Activated CD4-positive, alpha-beta T cell treated with anti-CD3 and anti-CD28 coated beads for 36 hours (primary cell): ENCODE measurements at regions of chr13 and their contacts with region 1.

Region 1: DNA sequence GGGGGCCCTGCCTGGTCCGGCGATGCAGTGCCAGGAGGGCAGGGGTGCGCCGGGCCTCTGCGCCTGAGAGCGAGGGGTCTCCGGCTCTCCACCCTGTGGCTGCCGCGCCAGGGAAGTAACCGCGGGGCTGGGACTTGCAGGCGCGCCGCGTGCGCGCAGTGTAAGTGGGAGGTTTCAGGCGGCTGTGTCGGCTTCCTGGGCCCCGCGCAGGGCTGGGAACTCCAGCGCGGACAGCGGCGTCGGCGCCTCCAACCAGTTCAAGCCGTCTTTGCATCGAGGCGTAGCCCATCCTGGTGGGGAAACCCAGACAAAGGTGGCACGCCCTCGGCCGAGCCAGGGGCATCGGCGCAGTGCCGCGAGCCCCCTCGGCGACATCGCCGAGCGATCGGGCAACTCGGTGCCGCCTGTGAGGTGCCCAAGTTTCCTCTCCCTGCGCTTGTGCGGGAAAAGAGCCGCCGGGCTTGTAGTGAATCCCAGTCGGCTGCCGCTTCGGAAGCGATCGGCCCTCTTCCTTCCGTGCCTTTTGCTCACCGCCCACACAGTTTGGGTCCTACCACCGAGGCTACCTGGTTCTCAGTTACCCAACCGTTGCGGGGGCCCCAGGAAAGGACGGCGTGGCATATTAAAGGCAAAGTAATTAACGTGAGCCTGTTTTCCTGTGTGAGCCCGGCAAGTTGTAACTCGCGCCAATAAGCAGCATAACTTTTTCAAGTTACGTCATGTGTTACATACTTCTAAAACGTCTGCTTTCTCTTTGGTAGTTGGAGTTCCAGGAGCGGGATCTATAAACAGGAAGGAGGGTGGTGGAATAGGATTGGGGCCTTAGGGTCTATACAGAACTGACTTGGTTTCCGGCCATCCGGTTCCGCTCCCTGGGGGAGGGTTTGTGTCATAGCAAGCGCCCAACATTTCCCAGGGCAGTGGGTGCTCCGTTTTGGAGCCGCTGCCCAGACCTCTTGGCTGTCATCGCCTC is 1.2 kb downstream of the LRCH1 start:
- DNase-seq: peak; percentile 82
- ATAC-seq: peak; percentile 66
- H3K4me3 Mint-ChIP-seq: peak overlapping the region; percentile 91
- H3K27ac Mint-ChIP-seq: peak overlapping the region; percentile 91
- H3K4me1 Mint-ChIP-seq: peaks cover 47% of the 10 kb centered on the region
- H3K27me3 Mint-ChIP-seq: no peaks in the 10 kb centered on the region

Region 2: GRCh38 chr13:45974500-45974899 is 579.7 kb before region 1 on chr13:
- CTCF ChIA-PET with region 1: no interaction called
- POLR2A ChIA-PET with region 1: no interaction called
- intact Hi-C with region 1: no loop called
- DNase-seq: no peak
- ATAC-seq: no peak
- H3K4me3 Mint-ChIP-seq: no peak overlapping the region
- H3K27ac Mint-ChIP-seq: no peak overlapping the region
- H3K4me1 Mint-ChIP-seq: no peaks in the 10 kb centered on the region
- H3K27me3 Mint-ChIP-seq: no peaks in the 10 kb centered on the region

Region 3: DNA sequence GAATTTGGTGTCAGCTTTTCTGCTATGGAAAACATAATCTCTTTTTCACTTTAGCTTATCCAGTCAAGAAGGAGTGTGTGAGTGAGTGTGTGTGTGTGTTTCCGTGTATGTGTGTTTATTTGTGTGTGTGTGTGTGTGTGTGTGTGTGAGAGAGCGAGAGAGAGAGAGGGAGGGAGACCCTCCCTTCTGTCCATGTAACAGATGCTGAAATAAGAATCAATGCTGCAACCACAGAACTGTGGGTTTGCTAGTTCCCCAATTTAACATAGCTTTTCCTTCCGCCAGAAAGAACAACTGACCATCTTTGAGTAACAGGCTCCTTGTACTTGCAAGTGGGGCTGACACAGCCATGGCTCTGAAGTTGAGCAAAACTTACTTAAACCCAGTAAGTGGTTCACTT is 377.4 kb before region 1 on chr13:
- CTCF ChIA-PET with region 1: no interaction called
- POLR2A ChIA-PET with region 1: no interaction called
- intact Hi-C with region 1: loop called in 1 of 2 experiments (anchors 2 kb)
- DNase-seq: no peak
- ATAC-seq: no peak
- H3K4me3 Mint-ChIP-seq: peak overlapping the region; percentile 97
- H3K27ac Mint-ChIP-seq: peak overlapping the region; percentile 92
- H3K4me1 Mint-ChIP-seq: peaks cover 65% of the 10 kb centered on the region
- H3K27me3 Mint-ChIP-seq: no peaks in the 10 kb centered on the region

Region 4: GRCh38 chr13:46535829-46536228 is 18.3 kb before region 1 on chr13:
- CTCF ChIA-PET with region 1: interaction called, 13 read pairs
- POLR2A ChIA-PET with region 1: no interaction called
- intact Hi-C with region 1: no loop called
- DNase-seq: no peak
- ATAC-seq: no peak
- H3K4me3 Mint-ChIP-seq: no peak overlapping the region
- H3K27ac Mint-ChIP-seq: no peak overlapping the region
- H3K4me1 Mint-ChIP-seq: peaks cover 11% of the 10 kb centered on the region
- H3K27me3 Mint-ChIP-seq: no peaks in the 10 kb centered on the region

Region 5: GRCh38 chr13:46577696-46578589 is 23.8 kb after region 1 on chr13:
- CTCF ChIA-PET with region 1: interaction called, 10 read pairs
- POLR2A ChIA-PET with region 1: interaction called, 5 read pairs
- intact Hi-C with region 1: no loop called
- DNase-seq: no peak
- ATAC-seq: peak; percentile 33
- H3K4me3 Mint-ChIP-seq: no peak overlapping the region
- H3K27ac Mint-ChIP-seq: peak overlapping the region; percentile 47
- H3K4me1 Mint-ChIP-seq: peaks cover 70% of the 10 kb centered on the region
- H3K27me3 Mint-ChIP-seq: no peaks in the 10 kb centered on the region

Region 6: DNA sequence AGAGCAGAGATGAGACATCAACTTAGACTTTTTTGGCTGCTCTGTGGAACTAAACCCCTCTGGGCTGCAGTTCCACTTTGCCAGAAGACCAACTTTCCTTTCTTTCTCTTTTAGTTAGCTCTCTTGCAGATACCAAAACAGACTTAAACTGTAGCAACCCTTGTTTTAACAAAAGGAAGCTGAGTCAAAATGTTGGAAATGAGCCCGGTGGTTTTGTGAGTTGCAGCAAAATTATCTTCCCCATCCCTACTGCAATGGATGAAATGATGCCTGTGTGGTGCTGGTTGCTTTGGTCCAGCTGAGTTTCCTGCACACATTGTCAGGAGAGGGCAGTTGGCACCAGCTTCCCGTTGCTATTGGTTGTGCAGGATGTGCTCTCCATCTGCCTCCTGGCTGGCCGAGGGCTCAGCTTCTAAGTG is 114.1 kb after region 1 on chr13:
- CTCF ChIA-PET with region 1: interaction called, 6 read pairs
- POLR2A ChIA-PET with region 1: no interaction called
- intact Hi-C with region 1: loop called (anchors 1 to 5 kb)
- DNase-seq: peak; percentile 39
- ATAC-seq: peak; percentile 57
- H3K4me3 Mint-ChIP-seq: peak overlapping the region; percentile 67
- H3K27ac Mint-ChIP-seq: peak overlapping the region; percentile 91
- H3K4me1 Mint-ChIP-seq: peaks cover 44% of the 10 kb centered on the region
- H3K27me3 Mint-ChIP-seq: no peaks in the 10 kb centered on the region

Region 7: GRCh38 chr13:46796515-46797474 is 242.6 kb after region 1 on chr13 and contains the start of gene ESD:
- CTCF ChIA-PET with region 1: no interaction called
- POLR2A ChIA-PET with region 1: no interaction called
- intact Hi-C with region 1: loop called in 1 of 2 experiments (anchors 1 kb)
- DNase-seq: peak; percentile 97
- ATAC-seq: peak; percentile 95
- H3K4me3 Mint-ChIP-seq: peak within 1 kb of the TSS; percentile 98
- H3K27ac Mint-ChIP-seq: peak within 1 kb of the TSS; percentile 98
- H3K4me1 Mint-ChIP-seq: peaks cover 38% of the 10 kb centered on the region
- H3K27me3 Mint-ChIP-seq: no peaks in the 10 kb centered on the region
- total RNA-seq, gene ESD: 150 to 162 TPM